MCF 10A (cell line): ENCODE measurements at regions of chr6 and their contacts with region 1.

Region 1: DNA sequence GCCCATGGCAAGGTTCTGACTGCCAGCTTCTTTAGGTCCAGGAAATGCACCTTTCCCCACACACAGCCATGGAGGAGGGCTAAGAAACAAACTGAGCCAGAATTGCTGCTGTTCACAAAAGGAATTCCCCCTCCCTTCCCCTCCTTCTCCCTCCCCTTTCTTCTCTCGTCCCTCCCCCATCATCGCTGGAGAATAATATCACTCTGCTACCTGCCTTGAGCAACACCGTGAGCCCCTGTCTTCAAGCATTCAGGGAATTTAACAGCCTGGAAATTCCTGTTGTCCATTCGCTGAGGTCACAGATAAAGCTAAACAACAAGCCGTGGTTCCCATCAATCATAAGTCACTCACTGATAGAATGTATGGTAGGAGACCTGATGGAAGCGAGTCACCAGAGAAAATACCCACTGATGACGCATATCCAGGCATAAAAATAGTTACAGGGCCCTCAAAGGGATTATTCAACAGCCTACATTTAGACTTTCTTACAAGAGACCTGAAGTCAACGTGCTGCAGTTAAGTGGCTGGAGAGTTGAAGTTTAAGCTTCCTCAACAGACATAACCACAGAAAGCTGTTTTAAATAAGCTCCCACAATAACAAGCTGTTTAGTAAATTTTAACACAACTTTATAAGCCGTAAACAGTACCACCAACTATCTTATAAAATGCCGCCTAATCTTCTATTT is 59.7 kb downstream of the HIVEP2 start:
- DNase-seq: peak; percentile 97
- H3K4me3 Mint-ChIP-seq: peak overlapping the region; percentile 71
- H3K27ac Mint-ChIP-seq: peak overlapping the region; percentile 36
- H3K4me1 Mint-ChIP-seq: peaks cover 32% of the 10 kb centered on the region
- H3K27me3 Mint-ChIP-seq: no peaks in the 10 kb centered on the region
- CTCF ChIP-seq: no peak

Region 2: GRCh38 chr6:142802124-142802523 is 83.2 kb before region 1 on chr6:
- CTCF ChIA-PET with region 1: interaction called, 3 read pairs
- POLR2A ChIA-PET with region 1: interaction called, 4 read pairs
- intact Hi-C with region 1: loop called (anchors 2 kb)
- DNase-seq: peak; percentile 96
- H3K4me3 Mint-ChIP-seq: no peak overlapping the region
- H3K27ac Mint-ChIP-seq: peak overlapping the region; percentile 75
- H3K4me1 Mint-ChIP-seq: peaks cover 10% of the 10 kb centered on the region
- H3K27me3 Mint-ChIP-seq: no peaks in the 10 kb centered on the region
- CTCF ChIP-seq: no peak

Region 3: GRCh38 chr6:142845624-142846458 is 39.5 kb before region 1 on chr6:
- CTCF ChIA-PET with region 1: interaction called, 3 read pairs
- POLR2A ChIA-PET with region 1: interaction called, 34 read pairs
- intact Hi-C with region 1: loop called (anchors 2 kb)
- DNase-seq: peak; percentile 92
- H3K4me3 Mint-ChIP-seq: peak overlapping the region; percentile 69
- H3K27ac Mint-ChIP-seq: peak overlapping the region; percentile 95
- H3K4me1 Mint-ChIP-seq: peaks cover 70% of the 10 kb centered on the region
- H3K27me3 Mint-ChIP-seq: no peaks in the 10 kb centered on the region
- CTCF ChIP-seq: no peak

Region 4: DNA sequence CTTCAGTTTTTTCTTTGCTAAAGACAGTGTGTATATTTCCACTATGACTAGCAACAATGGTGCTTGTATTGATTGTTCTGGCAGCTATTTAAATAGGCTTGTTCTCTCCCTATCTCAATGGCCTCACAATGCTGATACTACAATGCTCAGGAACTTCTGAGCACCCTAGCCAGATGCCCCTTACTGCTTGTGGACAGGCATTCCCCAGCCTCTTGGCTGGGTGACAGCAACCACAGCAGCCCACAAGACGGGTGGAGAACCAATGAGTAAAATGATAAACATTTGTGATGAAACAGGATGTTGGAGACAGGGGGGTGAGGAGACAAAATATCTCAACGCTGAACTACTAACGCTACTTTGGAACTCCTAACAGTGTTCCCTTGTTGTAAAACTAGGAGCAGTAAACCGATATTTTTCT is 17.3 kb after region 1 on chr6:
- CTCF ChIA-PET with region 1: no interaction called
- POLR2A ChIA-PET with region 1: interaction called, 4 read pairs
- intact Hi-C with region 1: loop called (anchors 1 kb)
- DNase-seq: peak; percentile 94
- H3K4me3 Mint-ChIP-seq: peak overlapping the region; percentile 41
- H3K27ac Mint-ChIP-seq: peak overlapping the region; percentile 91
- H3K4me1 Mint-ChIP-seq: peaks cover 33% of the 10 kb centered on the region
- H3K27me3 Mint-ChIP-seq: no peaks in the 10 kb centered on the region
- CTCF ChIP-seq: no peak

Region 5: GRCh38 chr6:143427109-143427817 is 541.9 kb after region 1 on chr6:
- CTCF ChIA-PET with region 1: interaction called, 4 read pairs
- POLR2A ChIA-PET with region 1: interaction called, 3 read pairs
- intact Hi-C with region 1: loop called (anchors 5 kb)
- DNase-seq: peak; percentile 78
- H3K4me3 Mint-ChIP-seq: no peak overlapping the region
- H3K27ac Mint-ChIP-seq: peak overlapping the region; percentile 84
- H3K4me1 Mint-ChIP-seq: peaks cover 11% of the 10 kb centered on the region
- H3K27me3 Mint-ChIP-seq: no peaks in the 10 kb centered on the region
- CTCF ChIP-seq: peak; percentile 98